Activated CD8-positive, alpha-beta T cell treated with anti-CD3 and anti-CD28 coated beads for 36 hours (primary cell): ENCODE measurements at regions of chr1 and their contacts with region 1.

Region 1: DNA sequence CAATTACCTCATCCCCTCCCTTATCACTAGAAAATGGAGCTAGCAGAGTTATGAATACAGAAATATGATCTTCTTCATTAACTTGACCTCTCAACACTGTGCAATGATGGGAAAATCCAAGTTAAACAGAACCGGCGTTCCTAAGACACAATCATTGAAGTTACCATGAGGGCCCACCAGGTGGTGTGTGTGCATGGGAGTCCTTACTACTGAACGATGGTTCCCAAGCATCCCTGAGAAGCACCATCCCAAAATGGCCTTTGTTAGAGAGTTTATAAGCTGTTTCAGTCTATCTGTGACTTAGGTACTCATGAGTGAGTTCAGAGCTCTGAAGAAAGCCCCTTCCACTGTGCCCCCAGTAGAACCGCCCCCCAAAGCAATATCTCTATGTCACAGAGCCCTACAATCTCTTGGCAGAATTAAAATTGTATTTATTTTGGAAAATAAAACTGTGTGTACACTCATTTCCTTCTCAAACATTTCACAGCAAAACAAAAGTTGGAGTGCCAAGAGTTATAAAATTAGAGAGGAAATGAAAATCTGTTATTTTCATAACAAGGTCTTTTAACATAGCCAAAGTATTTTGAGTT is 56.8 kb downstream of the PLD5 start:
- DNase-seq: peak; percentile 44
- ATAC-seq: peak; percentile 53
- H3K4me3 Mint-ChIP-seq: no peak overlapping the region
- H3K27ac Mint-ChIP-seq: no peak overlapping the region
- H3K4me1 Mint-ChIP-seq: no peaks in the 10 kb centered on the region
- H3K27me3 Mint-ChIP-seq: no peaks in the 10 kb centered on the region
- CTCF ChIP-seq: peak; percentile 53

Region 2: GRCh38 chr1:242515555-242515954 is 47.9 kb after region 1 on chr1:
- CTCF ChIA-PET with region 1: no interaction called
- POLR2A ChIA-PET with region 1: no interaction called
- intact Hi-C with region 1: no loop called
- DNase-seq: no peak
- ATAC-seq: no peak
- H3K4me3 Mint-ChIP-seq: no peak overlapping the region
- H3K27ac Mint-ChIP-seq: no peak overlapping the region
- H3K4me1 Mint-ChIP-seq: no peaks in the 10 kb centered on the region
- H3K27me3 Mint-ChIP-seq: peaks cover 18% of the 10 kb centered on the region
- CTCF ChIP-seq: no peak

Region 3: DNA sequence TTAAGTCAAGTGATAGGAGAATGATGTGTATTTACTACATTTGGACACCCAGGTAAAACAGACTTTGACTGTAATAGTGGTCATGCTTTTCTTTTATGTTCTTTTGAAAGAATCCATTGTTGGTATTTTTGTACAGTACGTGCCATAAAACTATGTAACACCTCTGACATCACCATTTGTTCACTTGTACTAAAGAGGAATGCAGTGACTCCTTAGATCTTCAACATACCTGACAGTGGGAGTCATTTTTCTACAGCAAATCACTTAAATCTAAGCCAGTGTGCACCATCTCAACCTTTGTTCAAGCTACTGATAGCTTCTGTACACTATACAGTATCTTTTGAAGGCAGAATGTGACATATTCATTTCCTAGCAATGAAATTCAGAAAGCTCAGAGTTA is 63.1 kb after region 1 on chr1:
- CTCF ChIA-PET with region 1: no interaction called
- POLR2A ChIA-PET with region 1: no interaction called
- intact Hi-C with region 1: no loop called
- DNase-seq: no peak
- ATAC-seq: no peak
- H3K4me3 Mint-ChIP-seq: no peak overlapping the region
- H3K27ac Mint-ChIP-seq: no peak overlapping the region
- H3K4me1 Mint-ChIP-seq: no peaks in the 10 kb centered on the region
- H3K27me3 Mint-ChIP-seq: peaks cover 16% of the 10 kb centered on the region
- CTCF ChIP-seq: no peak

Region 4: GRCh38 chr1:243325305-243325890 is 857.7 kb after region 1 on chr1:
- CTCF ChIA-PET with region 1: no interaction called
- POLR2A ChIA-PET with region 1: no interaction called
- intact Hi-C with region 1: loop called (anchors 5 kb)
- DNase-seq: peak; percentile 34
- ATAC-seq: peak; percentile 71
- H3K4me3 Mint-ChIP-seq: no peak overlapping the region
- H3K27ac Mint-ChIP-seq: no peak overlapping the region
- H3K4me1 Mint-ChIP-seq: no peaks in the 10 kb centered on the region
- H3K27me3 Mint-ChIP-seq: no peaks in the 10 kb centered on the region
- CTCF ChIP-seq: peak; percentile 84